Right ventricle myocardium superior (tissue), 1 donor: ENCODE measurements at regions of chr4 and their contacts with region 1.

Region 1: DNA sequence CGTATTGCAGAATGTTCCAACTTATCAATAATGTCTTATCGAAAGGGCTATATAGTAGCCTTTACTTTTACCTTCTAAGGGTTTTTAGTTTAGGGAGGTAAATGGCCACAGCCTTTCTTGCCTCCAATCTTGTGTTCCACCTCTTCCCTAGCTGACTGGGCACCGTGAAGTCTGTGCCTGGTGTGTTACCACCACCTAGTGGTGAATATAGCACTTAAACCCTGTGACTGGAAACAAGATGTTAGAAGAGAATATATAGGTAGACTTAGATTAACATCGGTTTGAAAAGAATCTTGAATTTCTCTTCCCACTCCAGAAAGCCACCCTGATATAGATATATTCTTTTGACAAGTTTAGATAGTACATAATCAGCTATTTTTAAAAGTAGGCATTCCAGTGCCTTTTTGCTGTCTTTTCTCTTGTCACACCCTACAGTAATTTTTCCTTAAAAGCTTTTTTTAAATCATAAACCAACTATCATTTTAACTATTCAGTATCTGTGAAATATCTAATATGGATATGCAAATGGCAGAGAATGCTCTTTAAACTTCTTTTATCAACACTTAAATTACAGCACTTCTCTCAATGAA is 27.8 kb upstream of the ADH7 start:
- DNase-seq: peak; percentile 45
- ATAC-seq: peak; percentile 91

Region 2: GRCh38 chr4:98467627-98468072 is 995.3 kb before region 1 on chr4:
- intact Hi-C with region 1: loop called (anchors 10 kb)
- DNase-seq: peak; percentile 59
- ATAC-seq: peak; percentile 97

Region 3: GRCh38 chr4:99117876-99118693 is 344.9 kb before region 1 on chr4:
- intact Hi-C with region 1: loop called (anchors 10 kb)
- DNase-seq: no peak
- ATAC-seq: peak; percentile 39